Activated B cell treated with CpG ODN at 0.5 μM for 24 hours (primary cell): ENCODE measurements at regions of chr5 and their contacts with region 1.

Region 1: DNA sequence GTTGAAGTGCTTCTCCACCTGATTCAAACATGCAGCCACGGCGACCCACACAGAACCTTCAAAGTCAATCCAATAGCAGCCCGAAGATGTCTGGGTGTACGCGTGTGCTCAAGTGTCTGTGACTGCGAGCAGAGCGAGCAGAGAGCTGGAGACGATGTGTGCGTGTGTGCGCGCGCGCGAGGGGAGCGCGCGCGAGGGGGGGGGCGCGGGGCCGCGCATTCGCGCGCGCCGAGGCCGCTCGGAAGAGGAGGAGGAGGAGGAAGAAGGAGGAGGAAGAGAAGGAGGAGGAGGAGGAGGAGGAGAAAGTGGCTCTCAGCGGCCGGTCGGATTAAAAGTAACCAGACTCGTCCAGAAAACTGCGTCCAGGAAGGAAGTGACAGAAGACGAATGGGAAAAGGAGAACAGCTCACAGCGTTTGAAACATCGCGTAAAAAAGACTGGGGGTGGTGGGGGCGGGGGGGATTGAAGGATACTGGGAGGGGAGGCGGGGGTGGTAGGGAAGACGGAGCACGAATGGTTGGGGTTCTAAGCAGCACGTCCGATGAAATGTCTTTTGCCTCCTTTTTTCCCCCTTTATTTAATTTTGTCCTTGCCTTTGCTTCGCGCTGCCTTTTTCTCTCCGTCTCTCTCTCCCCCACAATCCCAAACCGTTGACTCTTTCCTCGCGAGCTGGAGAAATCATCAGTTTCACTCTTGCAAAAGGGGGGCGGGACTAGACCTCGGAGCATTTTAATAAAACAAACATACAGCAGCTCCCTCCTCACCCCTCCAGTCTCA is at the start of gene MEF2C:
- DNase-seq: peak; percentile 62
- ATAC-seq: peak; percentile 57
- H3K4me3 Mint-ChIP-seq: peak within 1 kb of the TSS; percentile 99
- H3K27ac Mint-ChIP-seq: peak within 1 kb of the TSS; percentile 98
- H3K4me1 Mint-ChIP-seq: peaks cover 46% of the 10 kb centered on the region
- H3K27me3 Mint-ChIP-seq: no peaks in the 10 kb centered on the region
- CTCF ChIP-seq: no peak
- total RNA-seq, gene MEF2C: 348 and 359 TPM in 2 replicates

Region 2: GRCh38 chr5:88746438-88746882 is 136.8 kb before region 1 on chr5:
- CTCF ChIA-PET with region 1: no interaction called
- POLR2A ChIA-PET with region 1: interaction called, 12 read pairs
- intact Hi-C with region 1: no loop called
- DNase-seq: no peak
- ATAC-seq: peak; percentile 79
- H3K4me3 Mint-ChIP-seq: no peak overlapping the region
- H3K27ac Mint-ChIP-seq: peak overlapping the region; percentile 80
- H3K4me1 Mint-ChIP-seq: peaks cover 56% of the 10 kb centered on the region
- H3K27me3 Mint-ChIP-seq: no peaks in the 10 kb centered on the region
- CTCF ChIP-seq: no peak

Region 3: DNA sequence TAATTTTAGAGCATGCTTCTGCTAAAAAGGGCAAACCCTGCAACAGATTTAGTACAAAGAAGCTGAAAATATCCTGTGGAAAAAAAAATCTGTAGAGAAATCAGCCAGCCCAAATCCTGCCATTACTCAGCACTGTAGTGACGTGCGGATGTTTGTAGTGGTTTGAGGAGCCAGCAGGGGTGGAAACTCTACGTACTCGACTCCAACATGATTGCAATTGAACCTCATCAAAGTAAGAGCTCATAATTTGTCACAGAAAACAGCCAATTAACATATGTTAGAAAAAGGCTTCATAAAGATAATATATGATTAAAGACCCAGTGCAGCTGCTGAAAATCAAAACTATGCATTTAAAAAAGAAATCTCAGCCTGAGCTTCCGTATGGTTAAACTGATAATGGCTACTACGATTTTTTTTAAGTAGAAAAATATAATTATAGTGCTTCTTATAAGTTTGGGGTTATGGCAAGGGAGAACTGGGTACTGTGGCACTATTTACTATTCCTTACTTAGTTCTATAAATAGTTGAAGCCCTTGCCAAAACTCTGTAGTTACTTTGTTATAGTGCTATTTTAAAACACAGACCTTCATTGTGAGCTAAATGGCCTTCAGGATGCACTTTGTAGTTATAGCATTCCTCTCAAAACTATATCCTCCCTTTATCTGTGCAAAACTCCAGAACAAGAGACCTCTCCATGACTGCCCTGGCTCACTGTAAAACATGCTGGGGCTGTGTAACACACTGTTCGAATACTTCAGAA is 49.7 kb before region 1 on chr5:
- CTCF ChIA-PET with region 1: interaction called, 3 read pairs
- POLR2A ChIA-PET with region 1: interaction called, 54 read pairs
- intact Hi-C with region 1: no loop called
- DNase-seq: no peak
- ATAC-seq: peak; percentile 69
- H3K4me3 Mint-ChIP-seq: peak overlapping the region; percentile 66
- H3K27ac Mint-ChIP-seq: peak overlapping the region; percentile 87
- H3K4me1 Mint-ChIP-seq: peaks cover 81% of the 10 kb centered on the region
- H3K27me3 Mint-ChIP-seq: no peaks in the 10 kb centered on the region
- CTCF ChIP-seq: no peak

Region 4: GRCh38 chr5:89268460-89268859 is 385.2 kb after region 1 on chr5:
- CTCF ChIA-PET with region 1: no interaction called
- POLR2A ChIA-PET with region 1: interaction called, 31 read pairs
- intact Hi-C with region 1: loop called (anchors 5 kb)
- DNase-seq: no peak
- ATAC-seq: peak; percentile 27
- H3K4me3 Mint-ChIP-seq: peak overlapping the region; percentile 50
- H3K27ac Mint-ChIP-seq: peak overlapping the region; percentile 92
- H3K4me1 Mint-ChIP-seq: peaks cover 78% of the 10 kb centered on the region
- H3K27me3 Mint-ChIP-seq: no peaks in the 10 kb centered on the region
- CTCF ChIP-seq: no peak

Region 5: DNA sequence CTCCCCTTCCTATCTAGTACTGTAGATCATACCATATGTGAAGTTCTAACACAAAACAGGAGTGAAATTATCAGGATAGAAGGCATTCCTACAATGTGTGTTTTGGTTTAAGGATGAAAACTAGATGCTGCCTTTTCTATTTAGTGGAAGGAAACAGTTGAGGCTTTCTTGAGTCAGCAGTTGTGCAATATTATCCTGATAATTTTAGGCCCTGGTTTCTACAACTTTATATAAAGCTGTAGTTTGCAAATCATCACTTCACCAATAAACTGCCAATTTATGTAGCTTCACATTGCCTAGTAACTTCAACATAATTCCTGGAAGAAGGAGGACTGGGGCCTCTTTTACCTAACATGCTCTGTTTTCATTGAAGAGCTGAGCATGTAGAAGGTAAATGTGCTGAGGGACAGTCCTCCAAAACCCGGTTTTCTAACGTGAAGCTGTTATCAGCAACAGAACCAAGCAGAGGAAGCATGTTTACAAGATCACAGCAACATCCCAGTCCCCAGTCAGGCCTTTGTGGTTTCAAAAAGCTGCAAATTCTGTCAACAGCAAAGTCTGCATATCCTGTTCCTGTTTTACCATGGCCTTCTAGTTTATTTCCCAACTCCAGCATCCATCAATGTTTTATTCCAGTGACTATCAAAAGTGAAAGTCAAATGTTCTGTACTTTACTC is 513.2 kb after region 1 on chr5:
- CTCF ChIA-PET with region 1: no interaction called
- POLR2A ChIA-PET with region 1: interaction called, 3 read pairs
- intact Hi-C with region 1: loop called (anchors 5 kb)
- DNase-seq: no peak
- ATAC-seq: peak; percentile 59
- H3K4me3 Mint-ChIP-seq: peak overlapping the region; percentile 60
- H3K27ac Mint-ChIP-seq: peak overlapping the region; percentile 88
- H3K4me1 Mint-ChIP-seq: peaks cover 61% of the 10 kb centered on the region
- H3K27me3 Mint-ChIP-seq: no peaks in the 10 kb centered on the region
- CTCF ChIP-seq: no peak

Region 6: GRCh38 chr5:89729623-89730301 is 846.5 kb after region 1 on chr5:
- CTCF ChIA-PET with region 1: interaction called, 5 read pairs
- POLR2A ChIA-PET with region 1: interaction called, 5 read pairs
- intact Hi-C with region 1: loop called (anchors 2 kb)
- DNase-seq: no peak
- ATAC-seq: no peak
- H3K4me3 Mint-ChIP-seq: no peak overlapping the region
- H3K27ac Mint-ChIP-seq: peak overlapping the region; percentile 70
- H3K4me1 Mint-ChIP-seq: peaks cover 33% of the 10 kb centered on the region
- H3K27me3 Mint-ChIP-seq: no peaks in the 10 kb centered on the region
- CTCF ChIP-seq: no peak

Region 7: GRCh38 chr5:90264689-90265544 is 1381.7 kb after region 1 on chr5:
- CTCF ChIA-PET with region 1: interaction called, 4 read pairs
- POLR2A ChIA-PET with region 1: no interaction called
- intact Hi-C with region 1: loop called (anchors 5 kb)
- DNase-seq: peak; percentile 28
- ATAC-seq: peak; percentile 68
- H3K4me3 Mint-ChIP-seq: peak overlapping the region; percentile 48
- H3K27ac Mint-ChIP-seq: no peak overlapping the region
- H3K4me1 Mint-ChIP-seq: peaks cover 6% of the 10 kb centered on the region
- H3K27me3 Mint-ChIP-seq: peaks cover 3% of the 10 kb centered on the region
- CTCF ChIP-seq: peak; percentile 92